ENCODE measurements at regions of chr15 and their contacts with region 1.

Region 1: GRCh38 chr15:40857601-40858341 is 13.9 kb downstream of the SPINT1 start:
- DNase-seq: no peak
- H3K4me3 ChIP-seq: no peak overlapping the region
- H3K27me3 ChIP-seq: no peaks in the 10 kb centered on the region; the same call in 1 of the 2 replicates
- CTCF ChIP-seq: peak; percentile 100

Region 2: DNA sequence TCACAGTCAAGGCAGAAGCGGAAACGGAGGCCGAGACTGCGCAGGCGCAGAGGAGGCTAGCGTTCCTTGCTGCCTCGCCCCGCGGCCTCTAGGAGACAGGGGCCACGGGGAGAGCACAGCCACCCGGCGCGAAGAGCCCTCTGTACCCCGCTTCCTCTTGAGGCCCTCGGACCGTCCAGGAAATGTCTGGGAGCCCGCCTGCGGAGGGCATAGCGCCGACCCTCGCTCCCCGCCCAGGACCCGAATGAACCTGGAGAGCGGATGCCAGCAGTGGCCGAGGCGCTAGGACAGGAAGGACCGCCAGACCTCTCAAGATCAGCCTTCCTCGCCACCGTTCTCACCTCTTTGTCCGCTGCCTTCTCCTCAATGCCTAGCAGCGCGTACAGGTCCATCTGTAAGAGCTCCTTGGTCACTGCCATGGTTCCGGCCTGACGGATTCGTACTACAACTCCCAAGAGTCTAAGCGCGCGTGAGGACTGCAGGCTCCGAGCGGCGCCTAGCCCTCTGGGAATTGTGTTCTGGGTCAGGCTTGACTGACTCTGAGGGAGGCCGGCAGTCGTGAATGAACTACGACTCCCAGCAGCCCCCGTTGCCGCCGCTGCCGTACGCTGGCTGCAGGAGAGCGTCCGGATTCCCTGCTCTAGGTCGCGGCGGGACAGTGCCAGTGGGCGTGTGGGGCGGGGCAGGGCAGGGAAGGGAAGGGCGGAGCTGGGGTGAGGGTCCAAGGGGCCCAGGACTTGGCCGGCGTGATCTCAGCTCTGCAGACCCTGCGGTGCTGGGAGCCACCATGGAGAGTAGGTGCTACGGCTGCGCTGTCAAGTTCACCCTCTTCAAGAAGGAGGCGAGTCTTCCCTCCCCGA is 50.5 kb before region 1 on chr15 and contains the starts of genes DNAJC17 and ZFYVE19:
- CTCF ChIA-PET with region 1: interaction called, 12 read pairs
- POLR2A ChIA-PET with region 1: no interaction called
- DNase-seq: peak; percentile 90
- H3K4me3 ChIP-seq: peak within 1 kb of the TSS; percentile 71
- H3K27me3 ChIP-seq: no peaks in the 10 kb centered on the region
- CTCF ChIP-seq: no peak
- polyA plus RNA-seq, gene DNAJC17: 30.8 and 37.1 TPM in 2 replicates
- polyA plus RNA-seq, gene ZFYVE19: 22.6 and 31.9 TPM in 2 replicates

Region 3: GRCh38 chr15:40847205-40847961 is 10.4 kb before region 1 on chr15:
- CTCF ChIA-PET with region 1: interaction called, 81 read pairs
- POLR2A ChIA-PET with region 1: no interaction called
- DNase-seq: no peak
- H3K4me3 ChIP-seq: no peak overlapping the region
- H3K27me3 ChIP-seq: peaks cover 12% of the 10 kb centered on the region
- CTCF ChIP-seq: no peak

Region 4: DNA sequence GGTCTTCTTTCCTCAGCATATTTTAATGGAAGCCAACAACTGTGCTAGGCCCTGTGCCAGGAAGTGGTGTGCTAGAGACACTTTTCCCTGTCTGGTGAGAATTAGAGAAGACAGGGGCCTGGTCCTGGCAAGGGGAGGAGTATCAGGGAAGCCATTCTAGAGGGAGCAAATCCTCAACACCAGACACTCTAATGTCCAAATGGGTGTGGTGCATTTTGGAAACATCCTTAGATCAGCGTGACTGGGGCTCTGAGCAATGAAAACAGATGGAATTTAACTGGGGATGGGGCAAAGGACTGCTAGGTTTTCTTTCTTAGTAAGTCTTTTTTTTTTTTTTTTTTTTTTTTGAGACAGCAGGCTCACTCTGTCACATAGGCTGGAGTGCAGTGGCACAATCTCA is 28.8 kb after region 1 on chr15:
- CTCF ChIA-PET with region 1: interaction called, 201 read pairs
- POLR2A ChIA-PET with region 1: no interaction called
- DNase-seq: no peak
- H3K4me3 ChIP-seq: no peak overlapping the region
- H3K27me3 ChIP-seq: no peaks in the 10 kb centered on the region; the same call in 1 of the 2 replicates
- CTCF ChIP-seq: no peak

Region 5: DNA sequence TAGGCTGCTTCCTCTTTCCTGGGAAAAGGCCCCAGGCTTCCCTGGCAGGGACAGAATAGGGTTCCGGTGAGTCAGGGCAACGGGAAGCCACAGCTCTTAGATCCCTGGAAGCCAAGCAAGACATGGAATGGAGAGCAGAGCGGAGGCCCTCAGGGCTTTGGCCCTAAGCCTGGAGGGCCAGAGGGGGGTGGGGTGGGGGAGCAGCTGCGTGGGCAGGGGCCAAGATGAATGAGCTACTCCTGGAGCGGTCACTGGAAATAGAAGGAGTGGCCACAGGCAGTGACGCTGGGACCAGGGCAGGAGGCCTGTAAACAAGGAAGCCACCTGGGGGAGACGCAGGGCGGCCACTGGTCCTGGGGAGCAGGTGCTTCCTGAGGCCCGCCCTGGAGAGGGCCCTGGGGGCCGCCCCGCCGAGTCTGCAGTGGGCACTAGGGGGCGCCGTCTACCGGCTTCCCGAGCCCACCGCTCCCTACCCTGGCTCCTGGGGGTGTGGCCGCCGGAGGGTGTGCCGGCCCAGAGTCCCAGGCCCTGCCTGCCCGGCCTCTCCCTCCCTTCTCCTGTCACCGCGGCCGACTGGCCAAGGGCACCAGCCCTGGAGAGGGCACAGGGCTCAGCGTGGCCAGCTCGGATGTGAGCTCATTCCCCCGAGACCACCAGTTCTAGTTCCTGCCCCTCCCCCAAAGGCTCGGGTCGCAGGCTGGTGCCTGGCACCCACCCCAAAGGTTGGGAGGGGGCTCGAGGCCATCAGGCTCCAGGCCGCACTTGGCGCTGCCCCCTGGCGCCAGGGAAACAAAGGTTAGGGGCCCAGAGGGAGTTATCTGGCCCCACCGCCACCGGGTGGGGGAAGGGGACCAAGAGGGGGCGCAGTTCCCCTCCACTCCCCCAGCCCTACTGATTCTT is 48.6 kb after region 1 on chr15:
- CTCF ChIA-PET with region 1: interaction called, 20 read pairs
- POLR2A ChIA-PET with region 1: no interaction called
- DNase-seq: peak; percentile 92
- H3K4me3 ChIP-seq: peak overlapping the region; percentile 25
- H3K27me3 ChIP-seq: no peaks in the 10 kb centered on the region
- CTCF ChIP-seq: peak; percentile 86

Region 6: DNA sequence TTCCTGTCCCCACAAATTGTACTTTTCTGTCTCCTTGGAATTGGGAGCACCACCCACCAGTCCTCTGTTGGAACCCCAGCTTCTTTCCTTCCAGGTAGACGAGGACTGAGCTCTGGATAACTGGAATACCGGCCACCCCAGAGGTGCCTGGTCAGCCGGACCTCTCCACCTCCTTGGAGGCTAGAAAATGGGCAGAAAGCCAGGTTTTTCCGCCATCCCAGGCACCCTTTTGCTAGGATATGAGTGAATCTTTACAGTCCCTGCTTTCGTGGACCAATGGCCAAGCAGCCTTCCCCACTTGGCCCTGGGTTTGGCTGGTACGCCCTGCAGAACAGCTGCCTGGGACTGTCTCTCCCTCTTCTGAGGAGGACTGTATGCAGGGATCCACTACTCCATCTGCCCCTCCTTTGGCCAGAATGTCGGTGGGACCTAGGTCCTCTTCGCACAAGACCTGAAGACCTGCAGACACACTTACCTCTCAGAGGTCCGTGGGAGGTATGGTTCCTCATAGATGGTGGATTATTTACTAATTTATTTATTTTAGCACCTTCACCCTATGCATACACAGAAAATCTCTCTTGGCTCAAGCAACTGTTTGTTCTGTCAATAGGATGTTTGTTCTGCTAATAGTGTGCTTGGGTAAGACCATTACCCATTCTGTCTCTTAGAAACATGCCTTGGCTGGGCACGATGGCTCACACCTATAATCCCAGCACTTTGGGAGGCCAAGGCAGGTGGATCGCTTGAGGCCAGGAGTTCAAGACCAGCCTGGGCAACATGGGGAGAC is 86.9 kb after region 1 on chr15:
- CTCF ChIA-PET with region 1: no interaction called
- POLR2A ChIA-PET with region 1: no interaction called
- DNase-seq: no peak
- H3K4me3 ChIP-seq: no peak overlapping the region
- H3K27me3 ChIP-seq: no peaks in the 10 kb centered on the region
- CTCF ChIP-seq: no peak